ENCODE measurements at regions of chr22 and their contacts with region 1.

Region 1: GRCh38 chr22:37166675-37167066 is 17.0 kb upstream of the IL2RB start:
- DNase-seq: no peak
- H3K4me3 ChIP-seq: peak overlapping the region in 1 of 2 donors; percentile 31
- H3K27ac ChIP-seq: peak overlapping the region; percentile 58
- H3K4me1 ChIP-seq: peaks cover 14% of the 10 kb centered on the region
- H3K27me3 ChIP-seq: no peaks in the 10 kb centered on the region
- CTCF ChIP-seq: peak in 2 of 3 experiments; percentile 73 to 77
- POLR2A ChIP-seq: no peak

Region 2: GRCh38 chr22:37199103-37199759 is 32.6 kb after region 1 on chr22:
- intact Hi-C with region 1: loop called (anchors 2 kb)
- DNase-seq: peak in 1 of 2 donors; percentile 97
- H3K4me3 ChIP-seq: peak overlapping the region; percentile 73 to 75
- H3K27ac ChIP-seq: peak overlapping the region; percentile 98
- H3K4me1 ChIP-seq: peaks cover 41% of the 10 kb centered on the region
- H3K27me3 ChIP-seq: no peaks in the 10 kb centered on the region
- CTCF ChIP-seq: peak; percentile 82 to 94 (median 94)
- POLR2A ChIP-seq: peak in 1 of 2 donors; percentile 98

Region 3: GRCh38 chr22:37260901-37261336 is 94.2 kb after region 1 on chr22:
- intact Hi-C with region 1: loop called (anchors 5 kb)
- DNase-seq: no peak
- H3K4me3 ChIP-seq: no peak overlapping the region
- H3K27ac ChIP-seq: no peak overlapping the region
- H3K4me1 ChIP-seq: no peaks in the 10 kb centered on the region
- H3K27me3 ChIP-seq: no peaks in the 10 kb centered on the region
- CTCF ChIP-seq: peak in 2 of 3 experiments; percentile 61 to 64
- POLR2A ChIP-seq: no peak

Measured in vagina (tissue), 2 donors.